Esophagus muscularis mucosa (tissue), 4 donors: ENCODE measurements at regions of chr9 and their contacts with region 1.

Region 1: DNA sequence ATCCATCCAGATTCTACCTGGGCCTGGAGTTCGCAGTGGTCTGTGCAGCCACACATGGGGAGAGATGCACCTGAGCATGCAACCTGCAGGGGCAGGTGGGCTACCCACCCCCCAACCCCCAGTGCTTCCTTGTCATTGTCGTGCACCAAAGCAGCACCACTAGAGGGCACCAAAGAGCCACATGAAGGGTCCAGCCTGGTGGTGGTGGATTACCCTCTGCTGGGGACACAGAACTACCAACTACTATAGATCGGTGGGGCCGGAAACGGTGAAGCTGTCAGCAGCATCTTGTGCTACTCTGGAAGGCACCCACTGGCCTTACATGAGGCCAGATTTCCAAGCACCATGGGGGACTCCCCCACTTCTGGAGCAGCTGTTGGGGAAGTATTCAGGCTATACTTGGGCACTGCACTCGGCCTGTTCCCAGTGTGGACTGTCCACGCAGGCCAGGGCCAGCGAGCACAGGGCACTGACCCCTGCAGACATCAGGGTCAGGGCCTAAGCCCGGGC is 60.2 kb upstream of the TBC1D2 start:
- DNase-seq: peak; percentile 94
- H3K4me3 ChIP-seq: no peak overlapping the region
- H3K27ac ChIP-seq: no peak overlapping the region
- H3K4me1 ChIP-seq: peaks cover 0 to 5% (median 0%) of the 10 kb centered on the region in 4 donors
- H3K27me3 ChIP-seq: no peaks in the 10 kb centered on the region
- CTCF ChIP-seq: peak; percentile 71 to 90 (median 90)
- EP300 ChIP-seq: no peak
- POLR2A ChIP-seq: no peak

Region 2: DNA sequence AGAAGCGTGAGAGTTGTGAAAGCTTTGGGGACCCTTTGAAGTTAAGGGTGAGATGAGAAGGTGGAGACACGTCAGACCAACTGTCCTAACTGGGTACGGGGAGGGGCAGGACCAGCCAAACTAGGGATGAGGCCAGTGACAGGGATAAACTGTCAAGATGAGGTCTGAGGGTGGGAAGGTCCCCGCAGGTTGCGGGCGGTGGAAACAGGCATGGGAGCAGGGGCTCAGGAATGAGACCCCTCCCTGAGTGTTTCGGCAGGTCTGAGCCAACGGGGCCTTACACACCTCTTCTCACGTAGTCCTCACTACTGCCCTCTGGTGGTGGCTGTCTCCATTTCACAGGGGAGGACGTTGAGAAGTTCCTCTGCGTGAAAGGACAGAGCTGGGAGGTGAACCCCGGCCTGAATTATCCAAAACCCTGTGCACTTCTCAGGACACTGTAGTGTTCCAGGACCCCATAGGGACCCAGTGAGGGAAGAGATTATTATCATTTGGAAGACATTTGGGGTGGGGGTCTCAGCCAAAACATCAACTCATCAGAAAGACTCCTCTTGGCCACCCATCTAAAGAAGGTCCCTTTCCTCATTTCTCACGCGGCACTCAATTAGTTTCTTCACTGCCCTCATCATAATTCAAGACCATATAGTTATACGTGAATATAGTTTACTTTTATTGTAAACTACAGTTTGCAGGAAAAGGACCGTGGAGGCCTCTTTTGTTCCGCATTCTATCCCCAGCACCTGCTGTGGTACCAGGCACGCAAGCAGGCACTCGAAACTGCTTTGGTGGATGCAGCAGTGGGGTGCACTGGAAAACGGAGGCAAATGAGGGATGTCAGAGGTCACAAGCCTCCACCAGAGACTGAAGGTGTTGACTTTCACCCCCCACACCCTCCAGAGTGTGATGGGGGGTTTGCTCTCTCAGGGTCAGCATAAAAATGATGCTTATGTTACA is 280.7 kb before region 1 on chr9:
- intact Hi-C with region 1: no loop called
- DNase-seq: peak; percentile 98
- H3K4me3 ChIP-seq: peak overlapping the region in 2 of 4 donors; percentile 20 to 24
- H3K27ac ChIP-seq: no peak overlapping the region
- H3K4me1 ChIP-seq: peaks cover 0 to 10% (median 6%) of the 10 kb centered on the region in 4 donors
- H3K27me3 ChIP-seq: no peaks in the 10 kb centered on the region
- CTCF ChIP-seq: peak; percentile 78 to 89 (median 85)
- EP300 ChIP-seq: no peak
- POLR2A ChIP-seq: no peak

Region 3: GRCh38 chr9:98380065-98380681 is 64.6 kb after region 1 on chr9:
- intact Hi-C with region 1: no loop called
- DNase-seq: no peak
- H3K4me3 ChIP-seq: no peak overlapping the region
- H3K27ac ChIP-seq: no peak overlapping the region
- H3K4me1 ChIP-seq: no peaks in the 10 kb centered on the region
- H3K27me3 ChIP-seq: no peaks in the 10 kb centered on the region
- CTCF ChIP-seq: no peak
- EP300 ChIP-seq: no peak
- POLR2A ChIP-seq: no peak

Region 4: GRCh38 chr9:98707166-98708102 is 391.8 kb after region 1 on chr9:
- intact Hi-C with region 1: loop called (anchors 10 kb)
- DNase-seq: no peak
- H3K4me3 ChIP-seq: peak overlapping the region in 2 of 4 donors; percentile 8 to 29
- H3K27ac ChIP-seq: no peak overlapping the region
- H3K4me1 ChIP-seq: peaks cover 11 to 29% (median 28%) of the 10 kb centered on the region in 4 donors
- H3K27me3 ChIP-seq: peaks cover 0 to 97% (median 28%) of the 10 kb centered on the region in 4 donors
- CTCF ChIP-seq: peak in 2 of 3 experiments; percentile 18 to 22
- EP300 ChIP-seq: no peak
- POLR2A ChIP-seq: no peak

Region 5: GRCh38 chr9:98775831-98776441 is 460.3 kb after region 1 on chr9:
- intact Hi-C with region 1: loop called (anchors 2 kb)
- DNase-seq: no peak
- H3K4me3 ChIP-seq: no peak overlapping the region
- H3K27ac ChIP-seq: no peak overlapping the region
- H3K4me1 ChIP-seq: no peaks in the 10 kb centered on the region
- H3K27me3 ChIP-seq: no peaks in the 10 kb centered on the region
- CTCF ChIP-seq: peak; percentile 44 to 61 (median 52)
- EP300 ChIP-seq: no peak
- POLR2A ChIP-seq: no peak